ENCODE measurements at regions of chr6 and their contacts with region 1.

Region 1: GRCh38 chr6:31680840-31681671 is at the start of gene LY6G5C:
- DNase-seq: peak; percentile 91
- H3K4me3 ChIP-seq: peak within 1 kb of the TSS; percentile 57
- H3K27ac ChIP-seq: peak within 1 kb of the TSS; percentile 78
- H3K27me3 ChIP-seq: no peaks in the 10 kb centered on the region
- CTCF ChIP-seq: peak; percentile 66
- polyA plus RNA-seq, gene LY6G5C: 2.0 and 2.7 TPM in 2 replicates

Region 2: DNA sequence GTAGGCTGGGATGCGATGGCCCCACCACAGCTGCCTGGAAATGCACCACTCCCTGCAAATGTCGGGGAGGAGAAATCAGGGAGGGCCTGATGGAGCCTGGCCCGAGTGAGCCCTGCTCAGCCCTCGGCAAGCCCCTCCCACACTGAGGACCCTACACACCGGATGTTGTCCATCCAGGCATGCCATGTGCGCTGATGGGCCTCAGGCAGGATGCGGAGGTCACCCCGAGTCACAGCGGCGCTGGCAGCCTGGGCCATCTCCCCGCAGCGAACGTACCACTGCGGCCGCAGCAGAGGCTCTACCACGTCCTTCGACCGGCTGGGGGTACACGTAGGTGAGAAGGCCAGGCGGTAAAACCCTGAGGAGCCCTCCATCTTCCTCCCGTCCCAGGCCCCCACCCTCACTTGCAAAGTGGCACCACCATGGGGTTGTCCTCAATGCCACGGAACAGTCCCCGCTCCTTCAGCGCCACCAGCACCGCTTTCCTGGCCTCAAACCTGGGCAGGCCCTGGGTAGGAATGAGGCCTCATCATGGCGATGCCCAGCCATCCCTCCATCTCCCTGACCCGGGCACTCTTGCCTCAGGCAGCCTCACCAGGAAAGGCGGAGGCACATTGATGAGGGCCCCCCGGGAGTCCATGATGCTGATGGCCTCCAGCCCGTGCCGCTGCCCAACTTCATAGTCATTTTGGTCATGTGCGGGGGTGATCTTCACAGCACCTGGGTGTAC is 101.2 kb after region 1 on chr6:
- CTCF ChIA-PET with region 1: no interaction called
- POLR2A ChIA-PET with region 1: interaction called, 10 read pairs
- DNase-seq: no peak
- H3K4me3 ChIP-seq: no peak overlapping the region
- H3K27ac ChIP-seq: no peak overlapping the region
- H3K27me3 ChIP-seq: no peaks in the 10 kb centered on the region
- CTCF ChIP-seq: no peak

Region 3: DNA sequence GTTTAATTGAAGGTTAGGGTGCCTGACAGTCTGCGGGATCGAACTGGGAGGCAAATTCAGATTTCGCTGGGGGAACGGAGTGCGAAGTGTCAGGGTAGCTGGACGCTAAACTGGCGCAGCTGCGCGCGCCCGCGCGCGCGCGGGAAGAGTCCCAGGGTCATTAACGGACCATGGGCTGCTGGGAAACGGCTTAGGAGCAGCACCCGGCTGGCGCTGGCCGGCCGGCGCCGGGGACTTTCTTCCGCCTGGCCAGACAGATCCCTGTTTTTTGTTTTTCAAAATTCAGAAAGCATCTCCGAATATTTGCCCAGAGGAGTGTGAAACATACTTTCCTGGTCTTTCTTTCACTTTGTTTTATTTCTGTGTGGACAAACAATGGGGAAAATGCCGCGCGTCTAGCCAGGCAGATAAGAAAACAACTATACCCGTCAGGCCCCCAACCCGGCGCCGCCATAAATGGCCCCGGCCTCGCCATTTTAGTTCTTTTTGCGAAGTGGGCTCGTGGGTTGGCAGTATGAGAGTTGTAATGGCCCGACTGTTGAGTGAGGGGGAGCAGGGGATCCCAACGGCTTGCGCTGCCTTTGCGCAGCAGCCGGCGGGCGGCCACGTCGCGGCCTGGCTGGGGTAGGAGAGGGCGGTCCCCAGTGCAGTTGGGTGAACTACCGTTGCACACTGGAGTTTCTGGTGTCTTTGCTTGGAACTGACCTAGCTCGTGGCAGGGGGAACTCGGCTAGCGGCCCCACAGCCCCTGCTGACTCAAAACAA is 153.6 kb after region 1 on chr6:
- CTCF ChIA-PET with region 1: interaction called, 6 read pairs
- POLR2A ChIA-PET with region 1: interaction called, 10 read pairs
- DNase-seq: no peak
- H3K4me3 ChIP-seq: peak overlapping the region; percentile 92
- H3K27ac ChIP-seq: peak overlapping the region; percentile 81
- H3K27me3 ChIP-seq: no peaks in the 10 kb centered on the region
- CTCF ChIP-seq: 0 out of 2 replicates have a peak, but pooled peaks have one; percentile 2